Ovary (tissue), 10 donors: ENCODE measurements at regions of chr5 and their contacts with region 1.

Region 1: GRCh38 chr5:75511435-75512384 is at the starts of genes CERT1 and POLK:
- DNase-seq: peak; percentile 96 to 98 (median 97)
- H3K4me3 ChIP-seq: peak within 1 kb of the TSS; percentile 62
- H3K27ac ChIP-seq: peak within 1 kb of the TSS; percentile 90 to 91
- H3K4me1 ChIP-seq: peaks cover 2% of the 10 kb centered on the region
- H3K27me3 ChIP-seq: no peaks in the 10 kb centered on the region
- CTCF ChIP-seq: no peak
- EP300 ChIP-seq: no peak
- POLR2A ChIP-seq: peak; percentile 48
- total RNA-seq, gene CERT1: 34.5 to 41.8 (median 36.0) TPM
- total RNA-seq, gene POLK: 26.5 to 41.0 (median 33.2) TPM

Region 2: GRCh38 chr5:75336625-75337339 is 174.9 kb before region 1 on chr5 and contains the start of gene HMGCR:
- intact Hi-C with region 1: loop called in 1 of 4 experiments (anchors 10 kb)
- DNase-seq: peak; percentile 97 to 98 (median 97)
- H3K4me3 ChIP-seq: peak within 1 kb of the TSS; percentile 95
- H3K27ac ChIP-seq: peak within 1 kb of the TSS; percentile 35 to 82
- H3K4me1 ChIP-seq: peaks cover 1% of the 10 kb centered on the region
- H3K27me3 ChIP-seq: no peaks in the 10 kb centered on the region
- CTCF ChIP-seq: peak in 1 of 3 donors; percentile 3
- EP300 ChIP-seq: no peak
- POLR2A ChIP-seq: peak; percentile 47
- total RNA-seq, gene HMGCR: 13.0 to 140 (median 19.3) TPM